Gastrocnemius medialis (tissue), 4 donors: ENCODE measurements at regions of chr9 and their contacts with region 1.

Region 1: DNA sequence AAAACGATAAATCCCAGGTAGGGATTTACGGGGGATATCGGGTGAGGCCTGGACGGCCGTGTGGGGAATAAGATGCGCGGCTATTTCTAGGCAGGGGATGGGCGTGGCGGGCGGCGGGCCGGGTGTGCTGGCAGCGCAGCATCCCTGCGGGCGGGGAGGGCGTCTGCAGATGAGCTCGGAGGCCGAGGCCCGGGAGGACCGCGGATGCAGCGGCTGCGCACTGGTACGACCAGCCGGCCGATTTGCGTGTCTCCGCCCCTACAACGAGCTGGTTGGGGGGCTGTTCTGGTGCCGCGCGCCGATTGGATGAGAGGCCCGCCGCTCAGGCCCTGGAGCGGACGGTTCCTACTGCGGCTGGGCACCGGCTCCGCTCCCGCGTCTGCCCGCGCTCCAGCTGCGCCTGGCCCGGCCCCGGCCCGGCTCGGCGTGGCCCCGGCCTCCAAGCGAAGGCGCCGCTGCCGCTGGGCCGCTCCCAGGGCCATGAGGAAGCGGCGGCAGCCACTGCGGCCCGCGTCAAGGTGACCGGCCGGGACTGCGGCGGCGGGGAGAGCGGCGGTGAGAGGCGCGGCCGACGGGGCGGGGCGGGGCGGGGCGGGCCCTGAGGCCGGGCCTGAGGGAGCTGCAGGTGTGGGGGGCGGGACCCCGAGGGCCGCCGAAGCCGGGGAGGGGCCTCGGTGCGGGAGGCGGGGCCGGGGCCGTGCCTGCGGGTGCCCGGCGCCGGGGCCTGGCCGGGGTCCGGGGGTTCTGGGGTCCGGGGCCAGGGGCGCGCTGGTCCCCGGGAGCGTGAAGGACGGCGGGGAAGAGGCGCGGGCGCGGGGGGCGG is at the start of gene RALGPS1:
- DNase-seq: peak; percentile 95 to 96
- ATAC-seq: peak; percentile 98
- H3K4me3 ChIP-seq: peak within 1 kb of the TSS; percentile 19 to 67 (median 50)
- H3K27ac ChIP-seq: peak within 1 kb of the TSS; percentile 66 to 88 (median 72)
- H3K4me1 ChIP-seq: peaks cover 4 to 10% of the 10 kb centered on the region in 2 donors
- H3K27me3 ChIP-seq: no peaks in the 10 kb centered on the region
- CTCF ChIP-seq: no peak
- POLR2A ChIP-seq: peak; percentile 59 to 71
- total RNA-seq, gene RALGPS1: 2.2 to 10.3 (median 5.4) TPM

Region 2: DNA sequence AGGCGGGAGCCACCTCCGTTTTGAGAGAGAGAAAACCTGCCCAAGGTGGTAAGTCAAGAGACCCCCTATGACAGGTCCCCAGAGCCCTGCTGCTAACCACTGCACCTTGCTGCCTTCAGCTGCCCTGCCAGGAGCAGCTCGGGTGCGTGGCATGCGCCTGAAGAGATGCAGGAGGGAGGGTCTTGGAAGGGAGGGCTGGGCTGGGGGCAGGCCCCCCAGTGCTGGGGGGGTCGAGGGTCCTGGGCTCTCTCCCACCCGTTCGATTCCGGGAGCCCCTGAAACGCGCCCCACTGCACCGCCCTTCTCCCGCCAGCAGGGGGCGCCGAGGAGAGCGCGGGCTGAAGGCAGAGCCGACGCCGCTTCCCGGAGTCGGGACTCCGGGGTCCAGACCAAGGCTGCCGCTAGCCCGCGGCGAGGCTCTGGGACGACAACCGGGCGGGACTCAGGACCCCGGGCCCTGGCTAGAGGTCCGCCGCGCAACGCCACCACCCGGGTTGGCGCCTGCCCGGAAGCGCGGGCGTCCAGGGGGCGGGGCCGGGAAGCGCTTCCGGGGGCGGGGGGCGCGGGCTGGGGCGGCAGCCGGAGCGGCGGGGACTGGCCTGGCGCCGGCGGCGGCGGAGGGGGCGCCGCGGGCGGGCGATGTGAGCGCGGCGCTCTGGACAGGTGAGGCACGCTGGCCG is 54.5 kb before region 1 on chr9 and contains the start of gene ZBTB34:
- in situ Hi-C with region 1: no loop called
- intact Hi-C with region 1: loop called (anchors 2 kb)
- DNase-seq: peak; percentile 40 to 54
- ATAC-seq: peak; percentile 72 to 83
- H3K4me3 ChIP-seq: peak within 1 kb of the TSS; percentile 87 to 95 (median 90)
- H3K27ac ChIP-seq: peak within 1 kb of the TSS; percentile 95 to 98 (median 98)
- H3K4me1 ChIP-seq: peaks cover 40 to 44% of the 10 kb centered on the region in 2 donors
- H3K27me3 ChIP-seq: no peaks in the 10 kb centered on the region
- CTCF ChIP-seq: peak; percentile 99 to 100 (median 100)
- POLR2A ChIP-seq: no peak
- total RNA-seq, gene ZBTB34: 6.2 to 8.7 (median 6.9) TPM